ENCODE measurements at regions of chr1 and their contacts with region 1.

Region 1: GRCh38 chr1:100866041-100866900 is 28.4 kb downstream of the EXTL2 start:
- DNase-seq: peak; percentile 10
- H3K4me3 ChIP-seq: no peak overlapping the region
- H3K27ac ChIP-seq: peak overlapping the region; percentile 16 to 43; a peak in 2 of 4 replicates
- H3K4me1 ChIP-seq: peaks cover 0 to 4% of the 10 kb centered on the region in 2 experiments; a peak in 2 of 4 replicates
- H3K27me3 ChIP-seq: no peaks in the 10 kb centered on the region
- CTCF ChIP-seq: peak; percentile 79
- EP300 ChIP-seq: no peak
- RAD21 ChIP-seq: peak; percentile 64

Region 2: GRCh38 chr1:100132566-100133477 is 733.4 kb before region 1 on chr1 and contains the starts of genes SASS6 and TRMT13:
- CTCF ChIA-PET with region 1: no interaction called
- POLR2A ChIA-PET with region 1: no interaction called
- DNase-seq: peak; percentile 87
- H3K4me3 ChIP-seq: peak within 1 kb of the TSS; percentile 95 to 96
- H3K27ac ChIP-seq: peak within 1 kb of the TSS; percentile 66 to 85
- H3K4me1 ChIP-seq: peaks cover 5 to 17% of the 10 kb centered on the region in 2 experiments; a peak in 3 of 4 replicates
- H3K27me3 ChIP-seq: no peaks in the 10 kb centered on the region
- CTCF ChIP-seq: no peak
- EP300 ChIP-seq: peak in 1 of 2 experiments; percentile 39; a peak in 1 of 4 replicates
- RAD21 ChIP-seq: no peak
- polyA plus RNA-seq, gene SASS6: 0.48 and 0.58 TPM in 2 replicates
- polyA plus RNA-seq, gene TRMT13: 7.6 and 12.6 TPM in 2 replicates

Region 3: GRCh38 chr1:100347009-100347966 is 519.0 kb before region 1 on chr1:
- CTCF ChIA-PET with region 1: no interaction called
- POLR2A ChIA-PET with region 1: no interaction called
- DNase-seq: no peak
- H3K4me3 ChIP-seq: no peak overlapping the region
- H3K27ac ChIP-seq: no peak overlapping the region
- H3K4me1 ChIP-seq: peaks cover 0 to 6% of the 10 kb centered on the region in 2 experiments; a peak in 1 of 4 replicates
- H3K27me3 ChIP-seq: no peaks in the 10 kb centered on the region
- CTCF ChIP-seq: no peak
- EP300 ChIP-seq: no peak
- RAD21 ChIP-seq: no peak

Region 4: DNA sequence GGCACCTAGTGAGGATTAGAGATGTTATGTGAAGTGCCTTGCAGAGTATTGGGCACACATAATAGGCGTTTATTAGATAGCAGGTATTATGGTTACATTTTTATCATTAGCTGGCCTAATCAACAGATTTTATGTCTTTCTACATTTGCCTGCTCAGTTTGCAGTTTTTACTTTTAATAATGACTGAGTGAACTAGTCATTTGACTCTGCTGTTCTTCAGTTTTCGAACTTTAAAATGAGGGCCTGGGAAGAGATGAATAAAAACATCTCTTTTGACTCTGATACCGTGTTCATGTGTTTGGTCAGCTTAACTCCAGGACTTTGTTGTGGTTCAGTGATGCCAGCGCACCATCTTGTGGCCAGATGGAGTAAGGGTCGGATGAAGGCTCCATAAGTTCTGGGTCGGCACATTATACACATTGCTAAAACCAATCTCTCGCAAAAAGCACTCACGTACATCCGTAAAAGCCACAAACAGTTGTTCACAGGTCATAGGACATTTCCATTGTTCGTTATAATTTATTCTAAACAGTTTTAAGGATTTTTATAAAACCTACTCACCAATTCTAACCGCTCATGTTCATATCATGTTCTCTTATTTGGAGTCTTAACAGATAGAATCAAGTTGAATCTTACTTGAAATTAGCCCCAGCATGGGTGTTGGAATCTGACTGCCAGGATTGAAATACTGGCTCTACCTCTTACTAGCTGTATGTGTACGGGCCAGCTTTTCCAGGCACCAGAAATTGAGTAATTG is 406.7 kb before region 1 on chr1:
- CTCF ChIA-PET with region 1: interaction called, 263 read pairs
- POLR2A ChIA-PET with region 1: no interaction called
- DNase-seq: peak; percentile 62
- H3K4me3 ChIP-seq: no peak overlapping the region
- H3K27ac ChIP-seq: no peak overlapping the region
- H3K4me1 ChIP-seq: peaks cover 0 to 9% of the 10 kb centered on the region in 2 experiments; a peak in 2 of 4 replicates
- H3K27me3 ChIP-seq: no peaks in the 10 kb centered on the region
- CTCF ChIP-seq: peak; percentile 91
- EP300 ChIP-seq: no peak
- RAD21 ChIP-seq: peak; percentile 97

Region 5: DNA sequence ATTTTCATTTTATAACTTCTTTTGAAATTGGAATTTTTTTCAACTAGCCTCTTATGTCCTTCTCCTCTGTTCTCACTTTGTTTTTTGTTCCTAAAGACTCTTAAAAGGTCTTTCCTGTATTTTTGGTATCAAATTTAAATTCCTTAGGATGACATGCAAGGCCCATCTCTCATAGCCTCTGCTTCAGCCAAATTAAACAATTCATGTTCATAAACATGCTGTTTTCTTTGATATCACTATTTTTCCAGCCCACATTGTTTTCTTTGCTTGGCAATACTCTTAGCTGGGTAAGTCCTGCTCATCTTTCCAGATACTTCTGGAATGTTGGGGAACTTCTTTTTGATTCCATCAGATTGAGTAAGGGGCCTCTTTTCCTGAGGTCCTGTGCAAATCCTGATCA is 384.1 kb before region 1 on chr1:
- CTCF ChIA-PET with region 1: interaction called, 15 read pairs
- POLR2A ChIA-PET with region 1: no interaction called
- DNase-seq: no peak
- H3K4me3 ChIP-seq: no peak overlapping the region
- H3K27ac ChIP-seq: peak overlapping the region; percentile 0 to 51; a peak in 2 of 4 replicates
- H3K4me1 ChIP-seq: peaks cover 0 to 7% of the 10 kb centered on the region in 2 experiments; a peak in 1 of 4 replicates
- H3K27me3 ChIP-seq: no peaks in the 10 kb centered on the region
- CTCF ChIP-seq: no peak
- EP300 ChIP-seq: no peak
- RAD21 ChIP-seq: no peak

Region 6: GRCh38 chr1:100847361-100848082 is 18.7 kb before region 1 on chr1:
- CTCF ChIA-PET with region 1: interaction called, 11 read pairs
- POLR2A ChIA-PET with region 1: no interaction called
- DNase-seq: no peak
- H3K4me3 ChIP-seq: peak overlapping the region in 1 of 2 experiments; percentile 16; a peak in 1 of 4 replicates
- H3K27ac ChIP-seq: peak overlapping the region in 1 of 2 experiments; percentile 31; a peak in 1 of 4 replicates
- H3K4me1 ChIP-seq: no peaks in the 10 kb centered on the region
- H3K27me3 ChIP-seq: no peaks in the 10 kb centered on the region
- CTCF ChIP-seq: no peak
- EP300 ChIP-seq: no peak
- RAD21 ChIP-seq: no peak

Region 7: GRCh38 chr1:100883963-100884362 is 17.7 kb after region 1 on chr1:
- CTCF ChIA-PET with region 1: interaction called, 41 read pairs
- POLR2A ChIA-PET with region 1: no interaction called
- DNase-seq: no peak
- H3K4me3 ChIP-seq: no peak overlapping the region
- H3K27ac ChIP-seq: peak overlapping the region in 1 of 2 experiments; percentile 2; a peak in 1 of 4 replicates
- H3K4me1 ChIP-seq: no peaks in the 10 kb centered on the region; a peak in 2 of 4 replicates
- H3K27me3 ChIP-seq: no peaks in the 10 kb centered on the region
- CTCF ChIP-seq: peak; percentile 32
- EP300 ChIP-seq: no peak
- RAD21 ChIP-seq: no peak

Region 8: DNA sequence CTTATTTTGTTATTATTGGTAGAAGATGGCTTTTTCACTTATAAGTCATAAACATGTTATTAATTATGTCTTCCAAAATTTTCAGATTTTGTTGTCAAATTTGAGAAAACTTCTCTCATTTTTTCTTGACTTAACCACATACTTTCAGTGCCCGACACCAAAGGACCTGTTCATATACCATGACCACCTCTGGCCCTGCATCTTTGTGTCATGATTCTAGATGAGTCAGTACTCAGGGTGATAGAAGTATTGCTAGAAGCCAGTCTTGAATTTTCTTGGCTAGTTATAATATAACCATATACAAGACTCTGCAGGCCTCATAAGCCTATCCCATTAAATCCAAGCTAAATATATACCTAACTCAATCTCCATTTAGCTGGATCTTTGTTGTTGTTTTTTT is 194.7 kb after region 1 on chr1:
- CTCF ChIA-PET with region 1: no interaction called
- POLR2A ChIA-PET with region 1: no interaction called
- DNase-seq: no peak
- H3K4me3 ChIP-seq: no peak overlapping the region
- H3K27ac ChIP-seq: no peak overlapping the region
- H3K4me1 ChIP-seq: no peaks in the 10 kb centered on the region
- H3K27me3 ChIP-seq: no peaks in the 10 kb centered on the region
- CTCF ChIP-seq: no peak
- EP300 ChIP-seq: no peak
- RAD21 ChIP-seq: no peak

Measured in SK-N-SH (cell line).